ENCODE measurements at regions of chr1 and their contacts with region 1.

Region 1: GRCh38 chr1:226255380-226255779 is 31.9 kb downstream of the MIXL1 start:
- DNase-seq: no peak
- ATAC-seq: no peak
- H3K4me3 ChIP-seq: no peak overlapping the region
- H3K27ac ChIP-seq: no peak overlapping the region
- H3K4me1 ChIP-seq: no peaks in the 10 kb centered on the region
- H3K27me3 ChIP-seq: no peaks in the 10 kb centered on the region
- CTCF ChIP-seq: no peak

Region 2: GRCh38 chr1:225933072-225933471 is 322.3 kb before region 1 on chr1:
- intact Hi-C with region 1: no loop called
- DNase-seq: no peak
- ATAC-seq: no peak
- H3K4me3 ChIP-seq: no peak overlapping the region
- H3K27ac ChIP-seq: no peak overlapping the region
- H3K4me1 ChIP-seq: no peaks in the 10 kb centered on the region
- H3K27me3 ChIP-seq: no peaks in the 10 kb centered on the region
- CTCF ChIP-seq: no peak

Region 3: GRCh38 chr1:226349801-226350518 is 94.6 kb after region 1 on chr1:
- intact Hi-C with region 1: loop called in 1 of 2 experiments (anchors 10 kb)
- DNase-seq: no peak
- ATAC-seq: no peak
- H3K4me3 ChIP-seq: no peak overlapping the region
- H3K27ac ChIP-seq: no peak overlapping the region
- H3K4me1 ChIP-seq: no peaks in the 10 kb centered on the region
- H3K27me3 ChIP-seq: no peaks in the 10 kb centered on the region
- CTCF ChIP-seq: no peak

Measured in psoas muscle (tissue), 8 donors.